ENCODE measurements at regions of chr20 and their contacts with region 1.

Region 1: GRCh38 chr20:3846740-3847428 is at the start of gene MAVS:
- DNase-seq: peak; percentile 87
- H3K4me3 Mint-ChIP-seq: peak within 1 kb of the TSS; percentile 90
- H3K27ac Mint-ChIP-seq: peak within 1 kb of the TSS; percentile 81
- H3K4me1 Mint-ChIP-seq: peaks cover 22% of the 10 kb centered on the region
- H3K27me3 Mint-ChIP-seq: no peaks in the 10 kb centered on the region
- total RNA-seq, gene MAVS: 40.8 TPM in 2 replicates

Region 2: GRCh38 chr20:3686867-3687321 is 160.0 kb before region 1 on chr20:
- intact Hi-C with region 1: no loop called
- DNase-seq: no peak
- H3K4me3 Mint-ChIP-seq: no peak overlapping the region
- H3K27ac Mint-ChIP-seq: no peak overlapping the region
- H3K4me1 Mint-ChIP-seq: no peaks in the 10 kb centered on the region
- H3K27me3 Mint-ChIP-seq: peaks cover 28% of the 10 kb centered on the region

Region 3: GRCh38 chr20:3786665-3787323 is 60.1 kb before region 1 on chr20 and contains the start of gene CENPB:
- intact Hi-C with region 1: loop called (anchors 2 kb)
- DNase-seq: peak; percentile 88
- H3K4me3 Mint-ChIP-seq: peak within 1 kb of the TSS; percentile 86
- H3K27ac Mint-ChIP-seq: peak within 1 kb of the TSS; percentile 70
- H3K4me1 Mint-ChIP-seq: peaks cover 39% of the 10 kb centered on the region
- H3K27me3 Mint-ChIP-seq: no peaks in the 10 kb centered on the region
- total RNA-seq, gene CENPB: 72.3 and 80.2 TPM in 2 replicates

Region 4: GRCh38 chr20:3795511-3796468 is 51.1 kb before region 1 on chr20 and contains the start of gene CDC25B:
- intact Hi-C with region 1: loop called (anchors 1 kb)
- DNase-seq: peak; percentile 81
- H3K4me3 Mint-ChIP-seq: peak within 1 kb of the TSS; percentile 93
- H3K27ac Mint-ChIP-seq: peak within 1 kb of the TSS; percentile 96
- H3K4me1 Mint-ChIP-seq: peaks cover 47% of the 10 kb centered on the region
- H3K27me3 Mint-ChIP-seq: no peaks in the 10 kb centered on the region
- total RNA-seq, gene CDC25B: 71.7 and 76.2 TPM in 2 replicates

Region 5: DNA sequence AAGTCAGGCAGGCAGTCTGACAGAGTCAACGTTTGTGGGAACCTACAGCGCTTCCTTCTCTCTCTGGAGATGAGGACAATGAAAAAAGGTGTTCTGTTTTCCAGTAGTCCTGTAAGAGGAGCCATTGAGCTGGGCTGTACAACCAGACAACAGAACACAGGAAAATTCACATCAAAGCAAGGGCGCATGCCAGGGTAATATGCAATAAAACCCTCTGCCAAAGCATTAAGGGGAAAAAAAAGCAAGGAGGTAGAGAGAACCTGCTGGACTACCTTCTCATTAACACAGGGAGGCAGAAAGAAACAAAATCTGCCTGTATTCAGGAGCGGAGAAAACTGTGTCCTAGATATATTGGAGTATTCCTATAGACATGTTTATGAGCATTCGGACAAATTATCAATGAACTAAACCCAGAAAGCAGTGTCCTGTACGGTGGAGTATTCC is 167.2 kb after region 1 on chr20:
- intact Hi-C with region 1: loop called (anchors 1 kb)
- DNase-seq: no peak
- H3K4me3 Mint-ChIP-seq: peak overlapping the region; percentile 87
- H3K27ac Mint-ChIP-seq: peak overlapping the region; percentile 78
- H3K4me1 Mint-ChIP-seq: peaks cover 57% of the 10 kb centered on the region
- H3K27me3 Mint-ChIP-seq: peaks cover 4% of the 10 kb centered on the region